Activated T-helper 2 cell treated with anti-CD3 and anti-CD28 coated beads, Interferon-gamma antibody, Interleukin-2, Interleukin-4, amounts not matched to agents 10 μg/mL and 5 μg/mL and 100 μg/mL, durations not matched to agents 14 hours and 24 hours and 36 hours (primary cell): ENCODE measurements at regions of chr2 and their contacts with region 1.

Region 1: DNA sequence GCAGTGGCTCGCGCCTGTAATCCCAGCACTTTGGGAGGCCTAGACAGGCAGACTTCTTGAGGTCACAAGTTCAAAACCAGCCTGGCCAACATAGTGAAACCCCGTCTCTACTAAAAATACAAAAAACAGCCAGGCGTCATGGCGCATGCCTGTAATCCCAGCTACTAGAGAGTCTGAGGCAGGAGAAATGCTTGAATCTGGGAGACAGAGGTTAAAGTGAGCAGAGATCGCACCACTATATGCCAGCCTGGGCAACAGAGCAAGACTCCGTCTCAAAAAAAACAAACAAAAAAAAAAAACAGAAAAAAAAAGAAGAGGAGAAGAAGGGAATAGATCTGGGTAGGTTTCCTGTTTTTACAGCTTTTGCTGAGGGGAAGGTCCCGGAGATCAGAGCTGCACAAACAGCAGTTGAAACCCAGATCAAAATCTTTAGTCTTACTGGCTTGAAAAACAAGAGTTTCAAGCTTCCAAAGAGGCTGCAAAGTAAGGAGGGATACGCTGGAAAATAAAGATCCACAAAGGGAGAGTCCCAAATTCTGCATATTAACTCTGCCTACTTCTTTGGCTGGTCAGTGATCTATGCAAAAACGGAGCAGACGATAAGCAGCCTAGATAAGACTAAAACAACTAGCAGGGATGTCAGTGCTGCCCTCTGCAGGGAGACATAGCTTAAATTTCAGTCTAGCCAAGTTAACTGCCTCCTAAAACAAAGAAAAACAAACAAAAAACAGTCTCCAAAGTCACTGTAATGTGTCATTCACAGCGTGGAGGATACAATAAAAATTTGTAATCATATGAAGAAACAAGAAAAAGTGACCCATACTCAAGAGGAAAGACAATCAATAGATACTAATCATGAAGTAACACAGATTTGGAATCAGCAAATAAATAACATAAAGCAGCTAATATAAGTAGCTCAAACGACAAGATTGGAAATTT is 74.1 kb downstream of the TLK1 start:
- DNase-seq: peak; percentile 33
- H3K4me3 Mint-ChIP-seq: peak overlapping the region; percentile 78
- H3K27ac Mint-ChIP-seq: peak overlapping the region; percentile 69
- H3K4me1 Mint-ChIP-seq: peaks cover 61% of the 10 kb centered on the region
- H3K27me3 Mint-ChIP-seq: no peaks in the 10 kb centered on the region

Region 2: DNA sequence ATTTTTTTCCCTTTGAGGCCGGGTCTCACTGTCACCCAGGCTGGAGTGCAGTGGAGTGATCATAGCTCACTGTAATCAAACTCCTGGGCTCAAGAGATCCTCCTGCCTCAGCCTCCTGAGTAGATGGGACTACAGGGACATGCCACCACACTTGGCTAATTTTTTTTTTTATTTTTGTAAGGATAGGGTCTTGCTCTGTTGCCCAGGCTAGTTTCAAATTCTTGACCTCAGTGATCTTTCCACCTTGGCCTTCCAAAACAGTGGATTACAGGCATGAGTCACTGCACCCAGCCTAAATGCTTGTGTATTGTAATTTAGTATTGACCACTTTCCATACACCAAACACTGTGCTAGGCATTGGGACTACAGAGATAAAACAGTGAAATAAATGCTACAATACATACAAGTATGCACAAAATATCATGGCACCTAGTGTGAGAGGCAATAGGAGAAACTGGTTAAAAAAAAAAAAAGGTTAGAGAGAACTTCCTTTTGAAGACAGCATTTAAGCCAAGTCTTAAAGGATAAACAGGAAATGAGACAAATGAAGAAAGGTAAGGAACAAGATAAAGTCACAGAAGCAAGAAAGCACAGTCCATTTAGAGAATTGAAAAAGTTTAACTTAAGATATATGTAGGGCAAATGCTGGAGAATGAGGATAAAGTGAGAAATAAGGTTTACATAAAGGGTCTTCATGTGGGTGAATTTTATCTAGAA is 44.2 kb before region 1 on chr2:
- intact Hi-C with region 1: loop called (anchors 2 kb)
- DNase-seq: no peak
- H3K4me3 Mint-ChIP-seq: peak overlapping the region; percentile 10
- H3K27ac Mint-ChIP-seq: peak overlapping the region; percentile 79
- H3K4me1 Mint-ChIP-seq: peaks cover 27% of the 10 kb centered on the region
- H3K27me3 Mint-ChIP-seq: no peaks in the 10 kb centered on the region

Region 3: DNA sequence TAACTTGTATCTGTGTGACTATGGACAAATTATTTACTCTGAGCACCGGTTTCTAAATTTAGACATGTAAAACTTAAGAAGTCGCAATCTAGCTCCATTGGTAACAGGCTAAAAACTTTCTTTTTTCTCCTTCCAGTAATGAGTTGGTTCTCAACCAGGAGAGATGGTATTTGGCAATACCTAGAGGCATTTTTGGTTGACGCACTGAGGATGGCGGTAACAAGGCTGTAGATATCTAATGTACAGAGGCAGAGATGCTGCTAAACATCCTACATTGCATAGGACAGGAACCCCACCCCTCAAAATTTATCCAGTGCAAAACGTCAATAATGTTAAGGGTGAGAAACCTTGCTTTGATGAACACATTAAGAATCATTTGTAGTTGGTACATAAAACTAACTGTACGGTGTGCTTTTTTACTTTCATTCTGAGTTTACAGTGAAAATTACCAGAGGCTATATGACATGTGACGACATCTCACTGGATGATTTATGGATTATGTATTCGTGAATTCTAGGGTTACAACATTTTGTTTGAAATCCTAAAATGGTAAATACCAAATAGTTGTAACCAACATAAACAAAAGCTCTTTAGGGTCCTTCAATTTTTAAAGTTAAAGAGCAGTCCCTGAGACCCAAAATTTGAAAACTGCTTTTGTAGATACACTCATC is 17.2 kb before region 1 on chr2:
- intact Hi-C with region 1: no loop called
- DNase-seq: no peak
- H3K4me3 Mint-ChIP-seq: no peak overlapping the region
- H3K27ac Mint-ChIP-seq: no peak overlapping the region
- H3K4me1 Mint-ChIP-seq: peaks cover 10% of the 10 kb centered on the region
- H3K27me3 Mint-ChIP-seq: no peaks in the 10 kb centered on the region

Region 4: GRCh38 chr2:171136024-171136423 is 49.4 kb after region 1 on chr2:
- intact Hi-C with region 1: loop called (anchors 5 kb)
- DNase-seq: no peak
- H3K4me3 Mint-ChIP-seq: peak overlapping the region; percentile 44
- H3K27ac Mint-ChIP-seq: peak overlapping the region; percentile 94
- H3K4me1 Mint-ChIP-seq: peaks cover 23% of the 10 kb centered on the region
- H3K27me3 Mint-ChIP-seq: no peaks in the 10 kb centered on the region

Region 5: GRCh38 chr2:171244970-171245782 is 158.6 kb after region 1 on chr2:
- intact Hi-C with region 1: loop called (anchors 5 kb)
- DNase-seq: no peak
- H3K4me3 Mint-ChIP-seq: no peak overlapping the region
- H3K27ac Mint-ChIP-seq: no peak overlapping the region
- H3K4me1 Mint-ChIP-seq: peaks cover 40% of the 10 kb centered on the region
- H3K27me3 Mint-ChIP-seq: peaks cover 3% of the 10 kb centered on the region